BJ (cell line): ENCODE measurements at regions of chr11 and their contacts with region 1.

Region 1: DNA sequence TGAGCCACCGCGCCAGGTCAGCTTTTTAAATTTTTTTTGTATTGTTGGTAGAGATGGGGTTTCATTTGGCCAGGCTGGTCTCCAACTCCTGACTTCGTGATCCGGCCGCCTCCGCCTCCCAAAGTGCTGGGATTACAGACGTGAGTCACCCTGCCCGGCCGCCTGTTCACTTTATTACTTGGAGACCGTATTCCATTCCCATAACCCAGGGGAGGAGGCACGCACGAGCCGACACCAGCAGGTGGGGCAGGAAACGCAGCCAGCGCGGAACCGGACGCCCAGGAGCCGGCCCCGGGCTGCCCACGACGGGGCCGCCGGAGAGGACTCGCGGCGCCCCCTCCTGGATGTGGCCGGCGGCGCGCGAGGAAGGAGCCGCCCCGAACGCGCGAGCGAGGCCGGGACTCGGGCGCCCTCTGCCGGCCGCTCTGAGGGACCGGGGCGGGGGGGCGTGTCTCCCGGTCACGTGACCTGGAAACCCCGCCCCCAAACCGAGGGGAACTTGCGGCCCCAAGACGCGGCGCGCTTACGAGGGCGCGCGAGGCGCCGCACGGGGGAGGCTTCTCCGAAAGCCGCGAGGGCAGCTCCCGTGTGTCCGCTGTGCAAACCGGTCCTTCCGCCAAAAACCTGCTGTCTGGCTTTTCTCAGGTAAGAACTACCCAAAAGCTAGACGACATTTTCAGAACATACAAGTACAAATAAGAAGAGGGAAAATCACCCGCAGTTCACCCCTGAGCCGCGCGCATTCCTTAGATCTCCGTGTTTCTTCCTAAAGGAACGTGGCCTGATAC is 11.6 kb upstream of the RNH1 start:
- DNase-seq: peak; percentile 94
- H3K4me3 ChIP-seq: peak overlapping the region; percentile 35
- H3K27me3 ChIP-seq: no peaks in the 10 kb centered on the region
- CTCF ChIP-seq: peak; percentile 56

Region 2: GRCh38 chr11:506238-506994 is 12.2 kb before region 1 on chr11:
- CTCF ChIA-PET with region 1: interaction called, 12 read pairs
- POLR2A ChIA-PET with region 1: no interaction called
- DNase-seq: peak; percentile 86
- H3K4me3 ChIP-seq: peak overlapping the region; percentile 96
- H3K27me3 ChIP-seq: no peaks in the 10 kb centered on the region
- CTCF ChIP-seq: 0 out of 2 replicates have a peak, but pooled peaks have one; percentile 4

Region 3: DNA sequence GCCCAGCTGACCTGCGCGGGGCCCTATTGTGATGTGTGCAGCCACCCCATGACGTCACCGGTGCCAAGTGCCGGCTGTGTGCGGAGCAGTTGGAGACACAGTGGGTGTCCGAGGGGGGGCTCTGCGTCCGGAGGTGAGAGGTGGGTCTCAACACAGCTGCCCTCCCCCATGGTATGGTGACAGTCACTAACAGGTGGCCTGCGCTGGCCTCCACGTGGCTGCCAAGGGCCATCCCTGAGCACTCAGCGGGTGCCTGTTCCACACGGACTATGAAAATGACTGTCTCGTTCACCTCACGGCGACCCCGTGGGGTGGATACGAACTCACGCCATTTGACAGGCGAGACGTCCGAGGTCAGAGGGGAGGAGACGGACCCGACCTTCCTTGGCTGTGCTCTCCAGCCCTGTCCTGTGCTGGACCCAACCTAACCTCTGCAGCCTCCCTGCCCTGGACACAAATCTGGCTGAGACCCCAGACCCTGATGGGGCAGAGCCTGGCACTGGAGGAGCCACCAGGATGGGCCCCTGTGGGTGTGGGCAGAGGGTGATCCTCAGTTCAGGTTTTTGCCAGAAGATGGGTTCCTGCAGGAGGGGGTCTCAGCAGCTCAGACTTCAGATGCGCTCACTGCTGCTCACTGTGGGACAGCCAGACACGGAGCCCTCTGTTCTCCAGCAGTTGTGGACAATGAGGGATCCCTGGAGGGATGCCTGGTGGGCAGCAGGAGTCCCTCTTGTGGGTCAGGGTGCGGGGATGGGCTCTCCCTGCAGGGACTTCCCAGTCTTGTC is 10.3 kb after region 1 on chr11:
- CTCF ChIA-PET with region 1: interaction called, 19 read pairs
- POLR2A ChIA-PET with region 1: no interaction called
- DNase-seq: no peak
- H3K4me3 ChIP-seq: no peak overlapping the region
- H3K27me3 ChIP-seq: no peaks in the 10 kb centered on the region
- CTCF ChIP-seq: no peak

Region 4: DNA sequence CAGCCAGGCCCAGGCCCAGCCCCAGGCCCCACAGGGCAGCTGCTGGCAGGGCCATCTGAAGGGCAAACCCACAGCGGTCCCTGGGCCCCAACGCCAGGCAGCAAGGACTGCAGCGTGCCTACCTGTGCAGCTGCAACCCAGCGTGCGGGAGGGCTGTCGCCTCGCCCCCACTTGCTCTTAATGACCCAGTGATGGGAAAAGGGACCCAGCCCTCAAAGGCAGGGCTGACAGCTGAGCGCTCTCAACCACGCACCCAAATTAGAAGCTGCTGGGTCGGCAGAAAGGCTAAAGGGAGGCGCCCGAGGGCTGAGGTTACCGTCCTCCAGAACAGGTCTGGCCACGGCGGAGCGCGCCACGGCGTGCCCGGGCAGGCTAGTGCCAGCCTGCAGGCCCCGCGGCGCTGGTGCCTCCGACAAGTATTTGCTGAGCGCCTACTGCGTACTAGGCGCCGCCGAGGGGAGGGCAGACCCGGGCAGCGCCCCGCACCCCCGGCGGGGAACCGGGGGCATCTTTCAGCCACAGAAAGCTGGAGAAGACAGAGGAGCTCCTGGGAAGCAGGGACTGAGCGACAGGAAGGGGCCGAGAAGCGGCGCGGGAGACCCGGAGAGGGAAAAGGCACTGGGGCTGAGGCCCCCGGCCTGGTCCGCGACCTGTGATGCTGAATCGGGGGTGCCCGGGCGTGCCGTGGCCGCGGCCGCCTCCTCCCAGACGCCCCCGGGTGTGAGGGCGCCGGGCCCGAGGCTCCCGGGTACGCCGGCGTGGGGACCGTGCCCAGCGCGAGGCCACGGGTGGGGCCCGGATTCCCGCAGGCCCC is 15.9 kb after region 1 on chr11:
- CTCF ChIA-PET with region 1: interaction called, 19 read pairs
- POLR2A ChIA-PET with region 1: no interaction called
- DNase-seq: no peak
- H3K4me3 ChIP-seq: peak overlapping the region; percentile 65
- H3K27me3 ChIP-seq: no peaks in the 10 kb centered on the region
- CTCF ChIP-seq: no peak

Region 5: DNA sequence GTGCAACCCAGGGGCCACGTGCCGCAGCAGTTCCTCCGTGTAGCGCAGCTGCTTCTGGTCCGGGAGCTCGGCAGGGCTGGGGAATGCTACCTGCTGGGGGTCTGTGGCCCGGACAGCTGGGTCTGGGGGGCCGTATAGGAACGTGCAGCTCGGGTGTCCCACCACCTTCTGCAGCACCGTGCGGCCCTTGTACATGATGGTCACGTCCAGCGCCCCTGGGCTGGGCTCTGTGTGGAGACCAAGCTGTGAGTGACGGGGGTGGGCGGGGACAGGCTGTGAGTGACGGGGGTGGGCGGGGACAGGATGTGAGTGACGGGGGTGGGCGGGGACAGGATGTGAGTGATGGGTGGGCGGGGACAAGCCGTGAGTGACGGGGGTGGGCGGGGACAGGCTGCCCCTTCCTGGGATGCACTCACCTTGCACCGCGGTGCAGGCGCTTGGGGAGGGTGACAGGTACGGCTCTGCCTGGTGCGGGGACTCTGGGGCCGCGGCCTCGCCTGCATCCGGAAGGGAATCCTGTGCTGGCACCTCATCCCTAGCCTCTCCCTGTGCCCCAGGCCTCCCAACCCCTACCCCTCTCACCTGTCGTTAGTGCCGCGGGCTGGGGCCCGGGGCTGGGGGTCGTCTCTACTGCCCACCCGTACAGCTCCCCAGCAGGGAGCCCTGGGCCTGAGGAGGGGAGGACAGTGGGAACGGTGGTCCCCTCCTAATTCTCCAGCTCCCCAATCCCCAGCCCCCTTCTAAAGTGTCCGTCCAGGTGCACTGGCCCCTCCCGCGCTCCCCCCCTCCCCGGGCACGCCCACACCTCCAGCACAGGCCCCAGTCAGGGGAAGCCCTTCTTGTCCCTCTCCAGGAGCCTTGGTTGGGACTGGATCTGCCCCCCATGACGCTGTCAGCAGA is 95.0 kb after region 1 on chr11:
- CTCF ChIA-PET with region 1: no interaction called
- POLR2A ChIA-PET with region 1: no interaction called
- DNase-seq: no peak
- H3K4me3 ChIP-seq: no peak overlapping the region
- H3K27me3 ChIP-seq: no peaks in the 10 kb centered on the region
- CTCF ChIP-seq: no peak